Naive thymus-derived CD4-positive, alpha-beta T cell (primary cell): ENCODE measurements at regions of chr19 and their contacts with region 1.

Region 1: DNA sequence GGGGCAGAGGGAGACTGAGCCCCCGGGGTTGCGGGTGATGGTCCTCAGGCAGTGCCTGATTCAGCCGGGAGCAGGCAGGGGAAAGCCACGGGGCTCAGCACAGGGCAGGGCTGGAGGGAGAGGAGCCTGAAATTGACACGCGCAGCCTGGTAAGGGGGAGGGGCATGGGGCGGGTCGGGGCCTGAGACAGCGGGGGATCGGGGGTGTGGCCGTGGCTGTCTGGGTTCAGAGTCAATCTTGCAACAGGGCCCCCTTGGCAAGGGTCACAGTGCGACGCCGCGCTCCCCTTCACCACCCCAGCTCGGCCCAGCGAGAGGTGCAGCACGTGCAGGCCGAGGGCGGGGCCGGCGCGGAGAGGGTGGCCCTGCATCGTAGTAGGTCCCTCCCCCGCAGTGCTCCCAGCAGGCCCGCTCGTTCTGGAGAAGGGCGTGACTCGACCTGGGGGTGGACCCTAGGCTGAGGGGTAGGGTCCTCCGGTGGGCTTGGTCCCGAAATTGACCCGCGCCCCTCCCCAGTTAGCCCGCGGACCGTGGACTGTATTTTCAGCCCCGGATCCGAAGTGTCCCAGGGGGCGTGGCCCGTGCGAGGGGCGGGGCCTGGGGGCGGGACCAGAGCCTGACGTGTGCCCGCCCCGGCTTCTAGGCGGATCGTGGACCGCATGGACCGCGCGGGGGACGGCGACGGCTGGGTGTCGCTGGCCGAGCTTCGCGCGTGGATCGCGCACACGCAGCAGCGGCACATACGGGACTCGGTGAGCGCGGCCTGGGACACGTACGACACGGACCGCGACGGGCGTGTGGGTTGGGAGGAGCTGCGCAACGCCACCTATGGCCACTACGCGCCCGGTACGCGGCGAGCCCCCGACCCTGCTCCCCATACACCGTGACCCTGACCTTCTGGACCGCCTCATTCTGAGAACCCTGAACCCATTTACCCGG is 6.0 kb downstream of the RCN3 start:
- DNase-seq: peak; percentile 80 to 96 (median 89)
- ATAC-seq: peak; percentile 94
- H3K4me3 ChIP-seq: peak overlapping the region; percentile 58
- H3K4me3 Mint-ChIP-seq: peak overlapping the region; percentile 77 to 95 (median 91)
- H3K27ac ChIP-seq: peak overlapping the region; percentile 66
- H3K27ac Mint-ChIP-seq: peak overlapping the region; percentile 41 to 95 (median 72)
- H3K4me1 ChIP-seq: peaks cover 12 to 21% of the 10 kb centered on the region in 2 donors
- H3K4me1 Mint-ChIP-seq: peaks cover 19 to 32% (median 24%) of the 10 kb centered on the region in 7 donors
- H3K27me3 ChIP-seq: no peaks in the 10 kb centered on the region
- H3K27me3 Mint-ChIP-seq: peaks cover 0 to 4% (median 0%) of the 10 kb centered on the region in 5 donors

Region 2: DNA sequence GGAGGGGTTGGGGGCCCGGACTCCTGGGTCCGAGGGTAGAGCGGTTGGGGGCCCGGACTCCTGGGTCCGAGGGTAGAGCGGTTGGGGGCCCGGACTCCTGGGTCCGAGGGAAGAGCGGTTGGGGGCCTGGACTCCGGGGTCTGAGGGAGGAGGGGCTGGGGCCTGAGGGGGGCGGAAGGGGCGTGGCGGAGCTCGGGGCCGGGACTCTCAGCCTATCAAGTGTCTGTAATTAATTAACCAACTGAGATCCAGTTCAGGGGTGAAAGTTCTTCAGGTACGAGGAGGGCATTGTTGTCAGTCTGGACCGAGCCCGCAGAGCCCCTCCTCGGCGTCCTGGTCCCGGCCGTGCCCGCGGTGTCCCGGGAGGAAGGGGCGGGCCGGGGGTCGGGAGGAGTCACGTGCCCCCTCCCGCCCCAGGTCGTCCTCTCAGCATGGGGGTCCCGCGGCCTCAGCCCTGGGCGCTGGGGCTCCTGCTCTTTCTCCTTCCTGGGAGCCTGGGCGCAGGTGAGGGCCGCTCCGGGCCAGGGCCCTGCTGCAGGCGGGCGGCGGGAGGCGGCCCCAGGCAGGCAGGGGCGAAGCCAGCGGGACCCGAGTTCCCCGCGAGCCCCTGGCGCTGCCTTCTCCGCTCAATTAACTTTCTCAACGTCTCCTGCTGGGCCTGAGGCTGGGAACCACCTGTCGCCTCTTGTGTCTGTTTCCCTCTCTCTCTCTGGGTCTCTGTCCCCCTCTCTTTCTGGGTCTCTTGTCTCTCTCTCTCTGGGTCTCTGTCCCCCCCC is 20.7 kb before region 1 on chr19:
- CTCF ChIA-PET with region 1: interaction called, 4 read pairs
- POLR2A ChIA-PET with region 1: interaction called, 7 read pairs
- intact Hi-C with region 1: loop called in 1 of 2 experiments (anchors 2 kb)
- DNase-seq: peak in 1 of 9 donors; percentile 12
- ATAC-seq: peak; percentile 49
- H3K4me3 ChIP-seq: peak overlapping the region; percentile 61
- H3K4me3 Mint-ChIP-seq: peak overlapping the region; percentile 84 to 95 (median 90)
- H3K27ac ChIP-seq: peak overlapping the region; percentile 81
- H3K27ac Mint-ChIP-seq: peak overlapping the region; percentile 74 to 92 (median 89)
- H3K4me1 ChIP-seq: peaks cover 11 to 40% of the 10 kb centered on the region in 2 donors
- H3K4me1 Mint-ChIP-seq: peaks cover 24 to 57% (median 40%) of the 10 kb centered on the region in 7 donors
- H3K27me3 ChIP-seq: no peaks in the 10 kb centered on the region
- H3K27me3 Mint-ChIP-seq: peaks cover 0 to 13% (median 0%) of the 10 kb centered on the region in 5 donors

Region 3: GRCh38 chr19:49766007-49766937 is 232.5 kb after region 1 on chr19:
- CTCF ChIA-PET with region 1: no interaction called
- POLR2A ChIA-PET with region 1: no interaction called
- intact Hi-C with region 1: no loop called
- DNase-seq: peak; percentile 86 to 100 (median 99)
- ATAC-seq: peak; percentile 92
- H3K4me3 ChIP-seq: peak overlapping the region; percentile 79
- H3K4me3 Mint-ChIP-seq: peak overlapping the region; percentile 89 to 98 (median 96)
- H3K27ac ChIP-seq: peak overlapping the region; percentile 80
- H3K27ac Mint-ChIP-seq: peak overlapping the region; percentile 84 to 98 (median 96)
- H3K4me1 ChIP-seq: peaks cover 11 to 16% of the 10 kb centered on the region in 2 donors
- H3K4me1 Mint-ChIP-seq: peaks cover 15 to 43% (median 36%) of the 10 kb centered on the region in 7 donors
- H3K27me3 ChIP-seq: no peaks in the 10 kb centered on the region
- H3K27me3 Mint-ChIP-seq: no peaks in the 10 kb centered on the region